ENCODE measurements at regions of chrX and their contacts with region 1.

Region 1: GRCh38 chrX:31036895-31037294 is 34.9 kb downstream of the FTHL17 start:
- DNase-seq: peak in 1 of 2 donors; percentile 24
- ATAC-seq: peak in 5 of 8 donors; percentile 52 to 75 (median 70)
- H3K4me3 ChIP-seq: no peak overlapping the region
- H3K27ac ChIP-seq: no peak overlapping the region
- H3K4me1 ChIP-seq: peaks cover 0 to 5% (median 0%) of the 10 kb centered on the region in 9 donors
- H3K27me3 ChIP-seq: peaks cover 0 to 22% (median 0%) of the 10 kb centered on the region in 7 donors
- CTCF ChIP-seq: peak; percentile 22 to 70 (median 58)

Region 2: GRCh38 chrX:31658360-31658759 is 621.5 kb after region 1 on chrX:
- intact Hi-C with region 1: loop called in 9 of 10 experiments (anchors 2 to 10 kb)
- DNase-seq: no peak
- ATAC-seq: no peak
- H3K4me3 ChIP-seq: no peak overlapping the region
- H3K27ac ChIP-seq: no peak overlapping the region
- H3K4me1 ChIP-seq: no peaks in the 10 kb centered on the region
- H3K27me3 ChIP-seq: no peaks in the 10 kb centered on the region
- CTCF ChIP-seq: peak; percentile 16 to 69 (median 58)